ENCODE measurements at regions of chr16 and their contacts with region 1.

Region 1: GRCh38 chr16:81403616-81404373 is 40.8 kb upstream of the CMIP start:
- DNase-seq: peak; percentile 86 to 94 (median 94)
- ATAC-seq: peak; percentile 98
- H3K4me3 ChIP-seq: no peak overlapping the region
- H3K4me1 ChIP-seq: peaks cover 8% of the 10 kb centered on the region
- CTCF ChIP-seq: peak; percentile 89

Region 2: GRCh38 chr16:81204798-81205680 is 198.8 kb before region 1 on chr16:
- intact Hi-C with region 1: no loop called
- DNase-seq: peak in 1 of 3 donors; percentile 65
- ATAC-seq: peak; percentile 66
- H3K4me3 ChIP-seq: no peak overlapping the region
- H3K4me1 ChIP-seq: no peaks in the 10 kb centered on the region
- CTCF ChIP-seq: peak; percentile 71

Region 3: DNA sequence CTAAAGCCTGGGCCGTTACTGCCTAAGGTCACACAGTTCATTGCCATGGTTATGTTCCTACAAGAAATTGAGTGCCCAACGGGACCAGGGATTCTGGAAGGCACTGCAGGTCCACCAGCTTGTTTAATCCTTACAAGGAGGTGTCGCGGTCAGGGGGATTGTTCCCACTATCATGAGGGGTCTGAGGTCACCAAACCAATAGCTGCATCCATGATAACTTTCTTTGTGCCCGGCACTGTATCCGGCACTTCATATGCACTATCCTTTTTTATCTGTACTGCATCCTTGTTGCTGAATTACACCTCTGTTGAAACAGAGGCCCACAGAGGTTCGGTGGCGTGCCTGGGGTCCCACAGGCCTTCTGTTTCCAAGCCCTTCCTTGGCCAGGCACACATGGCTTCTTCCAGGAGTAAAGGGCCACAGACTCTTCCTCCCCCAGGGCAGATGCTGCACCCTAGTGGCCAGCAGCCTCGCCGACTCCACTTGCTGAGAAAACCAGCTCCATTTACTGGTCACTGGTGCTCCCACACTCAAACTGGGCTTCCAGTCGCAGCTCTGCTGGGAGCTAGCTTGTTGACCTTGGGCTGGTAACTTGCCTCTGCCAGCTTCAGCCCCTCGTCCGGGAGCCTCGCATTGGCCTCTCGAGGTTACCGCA is 293.3 kb after region 1 on chr16:
- intact Hi-C with region 1: loop called in 1 of 2 experiments (anchors 10 kb)
- DNase-seq: peak in 2 of 3 donors; percentile 75 to 81
- ATAC-seq: peak; percentile 72
- H3K4me3 ChIP-seq: no peak overlapping the region
- H3K4me1 ChIP-seq: no peaks in the 10 kb centered on the region
- CTCF ChIP-seq: peak; percentile 54

Region 4: DNA sequence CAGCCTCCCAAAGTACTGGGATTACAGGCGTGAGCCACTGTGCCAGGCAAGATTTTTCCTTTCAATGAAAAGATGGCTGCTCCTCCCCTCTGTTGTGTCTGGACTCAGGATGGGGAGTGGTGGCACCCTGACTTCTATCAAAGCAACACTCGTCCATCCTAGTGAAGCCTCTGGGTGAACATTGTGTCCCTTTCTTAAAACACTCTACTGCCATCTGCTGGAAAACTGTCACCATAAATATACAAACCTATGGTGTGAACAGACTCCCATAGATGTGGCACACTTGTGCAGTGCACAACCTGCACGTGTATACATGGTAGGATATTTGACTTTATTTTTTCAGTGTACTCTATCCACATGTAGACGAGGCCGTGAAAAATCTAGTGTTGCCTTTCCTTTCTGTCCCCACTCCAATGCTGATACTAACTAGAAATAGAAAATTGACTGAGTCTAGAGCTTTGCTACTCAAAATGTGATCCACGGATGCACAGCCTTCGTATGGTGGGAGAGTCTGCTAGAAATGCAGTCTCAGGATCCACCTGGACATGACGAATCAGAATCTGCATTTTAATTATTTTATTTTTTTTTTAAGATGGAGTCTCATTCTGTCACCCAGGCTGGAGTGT is 319.4 kb after region 1 on chr16:
- intact Hi-C with region 1: loop called in 1 of 2 experiments (anchors 10 kb)
- DNase-seq: peak in 1 of 3 donors; percentile 87
- ATAC-seq: peak; percentile 87
- H3K4me3 ChIP-seq: no peak overlapping the region
- H3K4me1 ChIP-seq: no peaks in the 10 kb centered on the region
- CTCF ChIP-seq: peak; percentile 20

Measured in mucosa of descending colon (tissue), 3 donors.